AG04450 (cell line): ENCODE measurements at regions of chr20 and their contacts with region 1.

Region 1: DNA sequence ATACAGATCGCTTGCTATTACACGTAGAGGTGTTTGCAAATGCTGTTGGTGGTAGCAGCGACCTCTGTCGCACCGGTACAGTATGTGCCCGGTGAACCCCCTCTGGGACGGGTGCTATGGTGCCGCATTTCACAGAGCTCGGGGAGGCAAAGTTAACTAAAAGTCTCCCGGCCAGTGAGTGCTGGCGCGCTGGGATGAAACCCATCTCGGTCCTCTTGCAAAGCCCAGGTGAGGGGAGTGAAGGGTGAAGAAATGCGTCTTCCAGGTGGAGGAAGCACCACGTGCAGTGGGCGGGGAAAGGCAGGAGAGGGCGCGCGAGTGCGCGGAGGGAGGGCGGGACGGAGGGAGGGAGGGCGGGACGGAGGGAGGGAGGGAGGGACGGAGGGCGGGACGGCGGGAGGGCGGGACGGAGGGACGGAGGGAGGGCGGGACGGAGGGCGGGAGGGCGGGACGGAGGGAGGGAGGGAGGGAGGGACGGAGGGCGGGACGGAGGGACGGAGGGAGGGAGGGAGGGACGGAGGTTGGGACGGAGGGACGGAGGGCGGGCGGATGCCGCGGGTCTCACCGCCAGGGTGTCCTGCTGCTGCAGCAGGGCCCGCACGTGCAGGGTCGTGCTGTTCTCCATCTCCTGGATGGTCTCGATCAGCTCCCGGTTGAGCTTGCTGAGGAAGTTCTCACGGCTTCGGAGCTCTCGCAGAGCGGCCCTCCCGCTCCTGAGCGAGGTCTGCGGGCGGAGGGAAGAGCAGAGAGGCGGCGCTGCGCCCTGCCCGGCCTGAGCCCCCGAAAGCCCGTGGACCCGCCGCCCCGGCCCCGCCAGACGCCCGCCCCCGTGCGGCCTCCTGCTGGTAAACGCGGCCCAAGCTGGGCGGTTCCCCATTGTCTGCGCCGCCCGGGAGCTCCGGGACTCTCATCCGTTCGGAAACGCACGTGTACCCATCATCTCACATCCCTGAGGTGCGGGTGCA is 11.7 kb downstream of the C20orf96 start:
- DNase-seq: no peak
- H3K4me3 ChIP-seq: no peak overlapping the region
- H3K27ac ChIP-seq: no peak overlapping the region
- H3K27me3 ChIP-seq: no peaks in the 10 kb centered on the region
- CTCF ChIP-seq: no peak

Region 2: GRCh38 chr20:266596-267562 is 12.0 kb before region 1 on chr20:
- CTCF ChIA-PET with region 1: interaction called, 13 read pairs
- POLR2A ChIA-PET with region 1: no interaction called
- DNase-seq: peak; percentile 33
- H3K4me3 ChIP-seq: peak overlapping the region; percentile 70
- H3K27ac ChIP-seq: no peak overlapping the region
- H3K27me3 ChIP-seq: peaks cover 13% of the 10 kb centered on the region
- CTCF ChIP-seq: peak; percentile 93

Region 3: DNA sequence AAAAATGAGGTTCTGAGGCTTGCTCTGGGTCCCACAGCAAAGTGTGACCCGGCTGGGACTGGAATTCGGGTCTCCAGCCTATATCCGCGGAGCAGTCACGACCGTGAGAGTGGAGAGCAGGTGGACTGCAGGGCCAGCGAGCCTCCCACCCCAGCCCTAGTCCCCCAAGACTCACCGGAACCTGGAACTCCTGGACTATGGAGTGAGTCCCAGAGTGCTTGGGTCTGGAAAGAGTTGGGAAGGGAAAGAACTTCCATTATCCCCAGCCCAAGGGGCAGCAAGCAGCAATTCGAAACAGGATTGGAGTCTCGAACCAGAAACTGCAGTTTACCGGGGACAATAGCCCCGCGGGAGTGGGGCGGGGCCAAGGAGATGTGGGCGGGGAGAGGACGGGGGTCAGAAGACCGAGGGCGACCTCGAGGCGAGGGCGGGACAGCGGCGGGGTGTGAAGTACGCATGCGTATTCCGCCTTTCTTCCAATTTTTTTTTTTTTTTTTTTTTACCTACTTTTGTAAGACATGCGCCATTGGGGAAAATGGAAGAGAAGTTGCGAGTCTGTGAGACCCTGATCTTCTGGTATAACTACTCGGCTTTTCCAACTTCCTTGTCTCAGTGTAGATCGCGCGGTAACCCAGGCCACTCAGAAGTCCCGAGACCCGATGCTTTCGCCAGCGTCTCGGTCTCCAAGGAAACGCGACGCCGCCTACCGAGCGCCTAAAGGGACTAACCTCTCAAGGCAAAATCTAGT is 11.4 kb after region 1 on chr20 and contains the start of gene C20orf96:
- CTCF ChIA-PET with region 1: no interaction called
- POLR2A ChIA-PET with region 1: no interaction called
- DNase-seq: peak; percentile 78
- H3K4me3 ChIP-seq: peak within 1 kb of the TSS; percentile 96
- H3K27ac ChIP-seq: peak within 1 kb of the TSS; percentile 82
- H3K27me3 ChIP-seq: no peaks in the 10 kb centered on the region
- CTCF ChIP-seq: peak; percentile 73
- polyA plus RNA-seq, gene C20orf96: 12.9 and 13.7 TPM in 2 replicates